CD4-positive, alpha-beta T cell (primary cell): ENCODE measurements at regions of chr1 and their contacts with region 1.

Region 1: DNA sequence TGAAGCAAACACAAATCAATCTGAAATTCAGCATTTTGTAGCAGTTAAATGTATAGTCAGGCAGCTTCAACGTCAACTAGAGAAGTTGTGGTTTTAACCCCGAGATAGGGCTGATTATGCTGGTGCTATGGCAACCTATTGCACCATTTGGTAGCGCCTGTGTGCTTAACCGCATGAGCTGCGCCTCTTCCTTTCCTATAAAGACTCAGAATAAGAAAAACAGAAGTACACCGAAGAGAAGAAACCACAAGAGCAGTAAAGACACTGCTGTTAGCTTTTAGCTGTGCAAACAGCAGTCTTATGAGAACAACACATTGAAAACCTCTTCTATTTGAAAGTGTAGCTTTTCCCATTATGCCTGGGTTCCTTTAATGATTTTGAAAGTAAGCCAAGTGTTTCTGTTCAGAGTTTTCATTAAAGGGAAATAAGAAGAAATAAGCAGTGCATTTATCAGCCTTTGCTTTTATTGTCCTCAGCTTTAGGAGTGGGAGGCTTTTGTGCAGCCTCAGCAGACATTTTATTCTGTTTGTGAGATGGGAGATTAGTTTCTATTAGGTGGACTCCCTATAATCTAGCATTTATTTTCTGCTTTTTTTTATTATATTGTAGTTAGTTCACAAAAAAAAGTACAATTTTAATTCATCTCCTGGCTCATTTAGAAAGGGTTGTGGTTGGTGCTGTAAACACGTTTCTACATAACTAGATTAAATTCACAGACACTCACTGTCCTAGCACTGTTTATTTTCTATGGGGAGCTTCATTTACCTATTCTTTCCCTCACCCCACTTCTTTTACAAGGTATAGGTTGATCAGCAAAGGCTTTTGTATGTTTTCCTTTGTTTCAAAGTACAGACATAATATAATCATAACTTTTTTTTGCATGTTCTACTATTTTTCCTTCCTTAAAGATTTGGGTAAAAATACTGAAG is 43.3 kb downstream of the PTPRC start:
- DNase-seq: peak; percentile 57 to 97 (median 76)
- ATAC-seq: peak; percentile 72
- H3K4me3 ChIP-seq: peak overlapping the region; percentile 21
- H3K4me3 Mint-ChIP-seq: peak overlapping the region; percentile 78
- H3K27ac ChIP-seq: peak overlapping the region; percentile 89 to 91
- H3K27ac Mint-ChIP-seq: peak overlapping the region; percentile 100
- H3K4me1 ChIP-seq: peaks cover 32% of the 10 kb centered on the region
- H3K4me1 Mint-ChIP-seq: peaks cover 86% of the 10 kb centered on the region
- H3K27me3 ChIP-seq: no peaks in the 10 kb centered on the region
- H3K27me3 Mint-ChIP-seq: no peaks in the 10 kb centered on the region
- CTCF ChIP-seq: no peak

Region 2: DNA sequence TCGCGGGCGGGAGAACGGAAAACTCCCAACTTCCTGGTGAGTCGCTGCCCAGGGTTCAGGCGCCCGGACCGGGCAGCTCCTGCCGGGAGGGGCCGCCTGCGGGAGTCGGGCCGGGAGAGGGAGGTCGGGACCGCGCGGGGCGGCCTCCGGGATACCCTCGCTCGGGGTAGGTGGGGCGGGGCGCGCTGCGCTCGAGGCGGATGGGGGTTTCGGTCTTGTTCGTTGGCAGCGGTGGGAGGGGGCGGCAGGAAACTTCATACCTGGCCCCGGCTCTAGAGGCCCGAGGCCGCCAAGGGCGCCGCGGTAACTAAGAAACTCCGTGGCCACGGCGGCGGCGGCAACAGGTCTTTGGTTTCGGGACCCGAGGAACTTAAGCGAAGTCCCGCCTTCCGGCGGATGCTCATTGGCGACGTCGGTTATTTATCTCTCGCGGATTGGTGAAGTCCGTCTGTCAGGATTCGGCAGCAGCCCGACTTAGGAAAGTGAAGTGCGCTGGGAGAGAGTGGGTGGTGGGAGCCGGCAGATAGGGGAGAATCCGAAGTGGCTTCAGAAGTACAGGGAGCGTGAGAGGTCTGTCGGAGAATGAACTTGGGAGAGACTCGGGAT is 524.8 kb before region 1 on chr1:
- CTCF ChIA-PET with region 1: interaction called, 3 read pairs
- POLR2A ChIA-PET with region 1: interaction called, 7 read pairs
- intact Hi-C with region 1: loop called in 1 of 2 experiments (anchors 5 kb)
- DNase-seq: peak; percentile 62 to 93 (median 75)
- ATAC-seq: peak; percentile 45
- H3K4me3 ChIP-seq: peak overlapping the region; percentile 87
- H3K4me3 Mint-ChIP-seq: peak overlapping the region; percentile 97
- H3K27ac ChIP-seq: peak overlapping the region; percentile 86 to 95
- H3K27ac Mint-ChIP-seq: peak overlapping the region; percentile 98
- H3K4me1 ChIP-seq: peaks cover 23% of the 10 kb centered on the region
- H3K4me1 Mint-ChIP-seq: peaks cover 54% of the 10 kb centered on the region
- H3K27me3 ChIP-seq: no peaks in the 10 kb centered on the region
- H3K27me3 Mint-ChIP-seq: no peaks in the 10 kb centered on the region
- CTCF ChIP-seq: no peak

Region 3: GRCh38 chr1:198556971-198557370 is 125.1 kb before region 1 on chr1:
- CTCF ChIA-PET with region 1: no interaction called
- POLR2A ChIA-PET with region 1: interaction called, 12 read pairs
- intact Hi-C with region 1: no loop called
- DNase-seq: peak; percentile 15 to 96 (median 53)
- ATAC-seq: peak; percentile 92
- H3K4me3 ChIP-seq: peak overlapping the region; percentile 9
- H3K4me3 Mint-ChIP-seq: peak overlapping the region; percentile 71
- H3K27ac ChIP-seq: peak overlapping the region in 1 of 2 donors; percentile 1
- H3K27ac Mint-ChIP-seq: peak overlapping the region; percentile 40
- H3K4me1 ChIP-seq: peaks cover 32% of the 10 kb centered on the region
- H3K4me1 Mint-ChIP-seq: peaks cover 91% of the 10 kb centered on the region
- H3K27me3 ChIP-seq: no peaks in the 10 kb centered on the region
- H3K27me3 Mint-ChIP-seq: no peaks in the 10 kb centered on the region
- CTCF ChIP-seq: no peak

Region 4: GRCh38 chr1:198627436-198628066 is 54.5 kb before region 1 on chr1:
- CTCF ChIA-PET with region 1: interaction called, 3 read pairs
- POLR2A ChIA-PET with region 1: interaction called, 209 read pairs
- intact Hi-C with region 1: loop called in 1 of 2 experiments (anchors 5 kb)
- DNase-seq: peak in 1 of 14 experiments; percentile 73
- ATAC-seq: peak; percentile 43
- H3K4me3 ChIP-seq: peak overlapping the region; percentile 13
- H3K4me3 Mint-ChIP-seq: peak overlapping the region; percentile 66
- H3K27ac ChIP-seq: peak overlapping the region; percentile 33 to 58
- H3K27ac Mint-ChIP-seq: peak overlapping the region; percentile 83
- H3K4me1 ChIP-seq: peaks cover 46% of the 10 kb centered on the region
- H3K4me1 Mint-ChIP-seq: peaks cover 94% of the 10 kb centered on the region
- H3K27me3 ChIP-seq: no peaks in the 10 kb centered on the region
- H3K27me3 Mint-ChIP-seq: no peaks in the 10 kb centered on the region
- CTCF ChIP-seq: no peak

Region 5: GRCh38 chr1:198657550-198658064 is 24.5 kb before region 1 on chr1:
- CTCF ChIA-PET with region 1: interaction called, 8 read pairs
- POLR2A ChIA-PET with region 1: interaction called, 317 read pairs
- intact Hi-C with region 1: loop called in 1 of 2 experiments (anchors 1 kb)
- DNase-seq: peak in 5 of 14 experiments; percentile 21 to 85 (median 78)
- ATAC-seq: peak; percentile 25
- H3K4me3 ChIP-seq: peak overlapping the region; percentile 22
- H3K4me3 Mint-ChIP-seq: peak overlapping the region; percentile 66
- H3K27ac ChIP-seq: peak overlapping the region; percentile 81 to 85
- H3K27ac Mint-ChIP-seq: peak overlapping the region; percentile 90
- H3K4me1 ChIP-seq: peaks cover 25% of the 10 kb centered on the region
- H3K4me1 Mint-ChIP-seq: peaks cover 69% of the 10 kb centered on the region
- H3K27me3 ChIP-seq: no peaks in the 10 kb centered on the region
- H3K27me3 Mint-ChIP-seq: no peaks in the 10 kb centered on the region
- CTCF ChIP-seq: no peak

Region 6: GRCh38 chr1:198699167-198700015 is 17.3 kb after region 1 on chr1:
- CTCF ChIA-PET with region 1: interaction called, 5 read pairs
- POLR2A ChIA-PET with region 1: interaction called, 16 read pairs
- intact Hi-C with region 1: no loop called
- DNase-seq: peak; percentile 54 to 83 (median 68)
- ATAC-seq: peak; percentile 88
- H3K4me3 ChIP-seq: no peak overlapping the region
- H3K4me3 Mint-ChIP-seq: peak overlapping the region; percentile 66
- H3K27ac ChIP-seq: peak overlapping the region in 1 of 2 donors; percentile 46
- H3K27ac Mint-ChIP-seq: peak overlapping the region; percentile 85
- H3K4me1 ChIP-seq: peaks cover 36% of the 10 kb centered on the region
- H3K4me1 Mint-ChIP-seq: peaks cover 88% of the 10 kb centered on the region
- H3K27me3 ChIP-seq: no peaks in the 10 kb centered on the region
- H3K27me3 Mint-ChIP-seq: no peaks in the 10 kb centered on the region
- CTCF ChIP-seq: peak; percentile 70